B cell (primary cell): ENCODE measurements at regions of chr9 and their contacts with region 1.

Region 1: GRCh38 chr9:94681508-94681907 is 42.2 kb upstream of the FBP1 start:
- DNase-seq: peak; percentile 77
- ATAC-seq: peak; percentile 83
- H3K4me3 ChIP-seq: no peak overlapping the region
- H3K4me3 Mint-ChIP-seq: no peak overlapping the region
- H3K27ac ChIP-seq: no peak overlapping the region
- H3K27ac Mint-ChIP-seq: peak overlapping the region; percentile 22
- H3K4me1 ChIP-seq: no peaks in the 10 kb centered on the region
- H3K4me1 Mint-ChIP-seq: no peaks in the 10 kb centered on the region
- H3K27me3 ChIP-seq: peaks cover 0 to 6% (median 2%) of the 10 kb centered on the region in 4 experiments
- H3K27me3 Mint-ChIP-seq: peaks cover 17% of the 10 kb centered on the region
- CTCF ChIP-seq: peak; percentile 79

Region 2: GRCh38 chr9:94656200-94656599 is 25.3 kb before region 1 on chr9:
- CTCF ChIA-PET with region 1: interaction called, 17 read pairs
- POLR2A ChIA-PET with region 1: no interaction called
- intact Hi-C with region 1: no loop called
- DNase-seq: peak; percentile 86
- ATAC-seq: peak; percentile 100
- H3K4me3 ChIP-seq: peak overlapping the region in 4 of 5 experiments; percentile 36 to 66 (median 56)
- H3K4me3 Mint-ChIP-seq: peak overlapping the region; percentile 77
- H3K27ac ChIP-seq: peak overlapping the region; percentile 70 to 83
- H3K27ac Mint-ChIP-seq: peak overlapping the region; percentile 69
- H3K4me1 ChIP-seq: peaks cover 14 to 16% of the 10 kb centered on the region in 2 donors
- H3K4me1 Mint-ChIP-seq: peaks cover 17% of the 10 kb centered on the region
- H3K27me3 ChIP-seq: no peaks in the 10 kb centered on the region
- H3K27me3 Mint-ChIP-seq: peaks cover 5% of the 10 kb centered on the region
- CTCF ChIP-seq: no peak

Region 3: GRCh38 chr9:94913589-94913988 is 232.1 kb after region 1 on chr9:
- CTCF ChIA-PET with region 1: interaction called, 93 read pairs
- POLR2A ChIA-PET with region 1: no interaction called
- intact Hi-C with region 1: no loop called
- DNase-seq: no peak
- ATAC-seq: no peak
- H3K4me3 ChIP-seq: no peak overlapping the region
- H3K4me3 Mint-ChIP-seq: no peak overlapping the region
- H3K27ac ChIP-seq: no peak overlapping the region
- H3K27ac Mint-ChIP-seq: no peak overlapping the region
- H3K4me1 ChIP-seq: no peaks in the 10 kb centered on the region
- H3K4me1 Mint-ChIP-seq: peaks cover 8% of the 10 kb centered on the region
- H3K27me3 ChIP-seq: no peaks in the 10 kb centered on the region
- H3K27me3 Mint-ChIP-seq: no peaks in the 10 kb centered on the region
- CTCF ChIP-seq: no peak

Region 4: GRCh38 chr9:95116003-95116807 is 434.7 kb after region 1 on chr9:
- CTCF ChIA-PET with region 1: interaction called, 20 read pairs
- POLR2A ChIA-PET with region 1: no interaction called
- intact Hi-C with region 1: no loop called
- DNase-seq: no peak
- ATAC-seq: no peak
- H3K4me3 ChIP-seq: no peak overlapping the region
- H3K4me3 Mint-ChIP-seq: no peak overlapping the region
- H3K27ac ChIP-seq: no peak overlapping the region
- H3K27ac Mint-ChIP-seq: no peak overlapping the region
- H3K4me1 ChIP-seq: no peaks in the 10 kb centered on the region
- H3K4me1 Mint-ChIP-seq: no peaks in the 10 kb centered on the region
- H3K27me3 ChIP-seq: no peaks in the 10 kb centered on the region
- H3K27me3 Mint-ChIP-seq: no peaks in the 10 kb centered on the region
- CTCF ChIP-seq: no peak

Region 5: DNA sequence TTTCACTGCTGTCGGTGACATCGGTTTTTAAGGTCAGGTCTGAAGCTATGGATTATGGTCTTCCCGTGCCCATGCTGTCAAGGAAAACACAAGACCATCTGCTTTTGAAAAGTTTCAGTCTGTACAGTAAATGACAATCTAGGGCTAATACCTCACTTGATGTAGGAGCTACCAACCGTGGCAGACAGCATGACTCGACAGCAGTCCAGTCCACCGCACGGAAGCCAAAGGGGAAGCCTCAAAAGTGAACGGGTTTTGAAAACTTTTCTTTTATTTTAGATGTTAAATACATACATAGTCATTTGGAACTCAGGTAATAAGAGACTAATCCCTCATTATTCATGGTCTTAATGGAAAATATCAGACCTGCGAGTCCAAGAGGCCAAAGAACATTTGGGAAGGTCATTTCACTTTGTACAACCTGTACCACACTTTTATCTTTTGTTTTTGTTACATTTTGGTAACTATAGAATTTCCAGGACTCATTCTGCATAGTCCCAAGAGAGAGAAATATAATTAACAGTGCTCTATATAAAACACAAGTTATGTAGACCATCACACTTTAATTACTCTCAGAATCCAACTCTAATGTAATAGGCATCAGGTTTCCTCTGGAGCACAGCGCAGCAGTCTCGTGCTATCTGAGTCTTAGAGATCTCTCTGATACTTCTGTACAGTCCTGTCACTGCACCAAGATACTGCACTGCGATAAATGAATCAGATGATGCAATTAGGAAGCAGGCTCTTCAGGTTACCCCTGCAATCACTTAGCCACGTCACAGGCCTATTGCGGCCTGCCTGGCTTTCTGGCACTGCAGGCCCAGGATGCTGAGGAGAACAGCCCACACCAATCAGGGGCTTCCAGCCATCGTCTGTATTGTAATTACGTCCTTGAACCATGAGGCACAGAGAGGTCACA is 451.2 kb after region 1 on chr9:
- CTCF ChIA-PET with region 1: interaction called, 314 read pairs
- POLR2A ChIA-PET with region 1: no interaction called
- intact Hi-C with region 1: loop called (anchors 1 kb)
- DNase-seq: no peak
- ATAC-seq: no peak
- H3K4me3 ChIP-seq: no peak overlapping the region
- H3K4me3 Mint-ChIP-seq: no peak overlapping the region
- H3K27ac ChIP-seq: no peak overlapping the region
- H3K27ac Mint-ChIP-seq: no peak overlapping the region
- H3K4me1 ChIP-seq: peaks cover 0 to 1% of the 10 kb centered on the region in 2 donors
- H3K4me1 Mint-ChIP-seq: no peaks in the 10 kb centered on the region
- H3K27me3 ChIP-seq: no peaks in the 10 kb centered on the region
- H3K27me3 Mint-ChIP-seq: no peaks in the 10 kb centered on the region
- CTCF ChIP-seq: no peak

Region 6: DNA sequence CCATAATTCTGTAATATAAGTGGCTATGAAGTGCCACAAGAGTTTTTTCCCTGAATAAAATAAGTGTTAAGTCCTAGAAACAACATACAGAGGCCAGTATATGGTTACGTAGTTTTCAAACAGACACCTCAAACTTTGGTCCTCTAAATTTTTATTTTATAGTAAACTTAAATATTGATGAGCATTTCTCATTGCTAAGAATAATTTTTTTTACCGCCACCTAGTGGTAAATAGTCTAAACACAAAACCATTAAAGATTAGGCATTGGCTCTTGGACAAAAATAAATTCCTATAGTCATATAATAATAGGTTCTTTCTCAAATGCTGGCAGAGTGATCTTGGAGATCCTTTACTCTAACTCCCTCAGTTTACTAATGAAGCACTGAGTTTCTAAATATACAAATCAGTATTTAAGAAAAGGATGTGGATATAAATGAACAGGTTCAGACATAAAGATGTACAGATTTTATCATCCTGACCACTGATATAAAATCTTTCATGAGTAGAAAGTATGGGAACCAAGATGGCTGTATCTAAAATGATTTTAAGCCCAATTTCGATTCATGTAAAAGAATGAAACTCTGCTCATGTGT is 499.8 kb after region 1 on chr9:
- CTCF ChIA-PET with region 1: interaction called, 25 read pairs
- POLR2A ChIA-PET with region 1: no interaction called
- intact Hi-C with region 1: loop called (anchors 1 kb)
- DNase-seq: peak; percentile 23
- ATAC-seq: no peak
- H3K4me3 ChIP-seq: no peak overlapping the region
- H3K4me3 Mint-ChIP-seq: no peak overlapping the region
- H3K27ac ChIP-seq: no peak overlapping the region
- H3K27ac Mint-ChIP-seq: no peak overlapping the region
- H3K4me1 ChIP-seq: no peaks in the 10 kb centered on the region
- H3K4me1 Mint-ChIP-seq: no peaks in the 10 kb centered on the region
- H3K27me3 ChIP-seq: no peaks in the 10 kb centered on the region
- H3K27me3 Mint-ChIP-seq: no peaks in the 10 kb centered on the region
- CTCF ChIP-seq: peak; percentile 85